ENCODE measurements at regions of chr5 and their contacts with region 1.

Region 1: GRCh38 chr5:168047043-168047668 is 244.3 kb upstream of the WWC1 start:
- DNase-seq: no peak
- H3K4me3 ChIP-seq: no peak overlapping the region
- CTCF ChIP-seq: peak; percentile 36

Region 2: GRCh38 chr5:167582283-167582682 is 464.9 kb before region 1 on chr5:
- CTCF ChIA-PET with region 1: interaction called, 13 read pairs
- POLR2A ChIA-PET with region 1: no interaction called
- DNase-seq: no peak
- H3K4me3 ChIP-seq: no peak overlapping the region
- CTCF ChIP-seq: peak; percentile 5

Region 3: DNA sequence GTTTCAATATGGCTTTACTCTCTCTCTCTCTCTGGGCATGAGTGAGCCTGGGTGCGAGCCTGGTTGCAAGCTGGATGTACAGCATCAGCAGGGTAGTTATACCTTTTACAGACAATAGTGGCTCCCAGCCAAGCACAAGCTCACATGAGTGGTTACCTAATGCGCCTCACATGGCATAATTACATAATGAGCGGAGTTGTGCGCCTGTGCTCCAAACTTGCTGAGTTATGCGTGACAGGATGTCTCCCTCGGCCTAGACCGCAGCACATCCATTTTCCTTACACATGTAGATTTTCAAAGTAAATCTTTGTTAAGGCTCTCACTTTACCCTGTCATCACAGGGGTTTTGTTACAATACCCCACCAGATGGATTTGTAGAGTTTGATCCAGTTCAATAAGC is 10.7 kb after region 1 on chr5:
- CTCF ChIA-PET with region 1: interaction called, 10 read pairs
- POLR2A ChIA-PET with region 1: no interaction called
- DNase-seq: no peak
- H3K4me3 ChIP-seq: no peak overlapping the region
- CTCF ChIP-seq: no peak